Activated CD4-positive, alpha-beta T cell treated with anti-CD3 and anti-CD28 coated beads for 36 hours (primary cell): ENCODE measurements at regions of chr6 and their contacts with region 1.

Region 1: DNA sequence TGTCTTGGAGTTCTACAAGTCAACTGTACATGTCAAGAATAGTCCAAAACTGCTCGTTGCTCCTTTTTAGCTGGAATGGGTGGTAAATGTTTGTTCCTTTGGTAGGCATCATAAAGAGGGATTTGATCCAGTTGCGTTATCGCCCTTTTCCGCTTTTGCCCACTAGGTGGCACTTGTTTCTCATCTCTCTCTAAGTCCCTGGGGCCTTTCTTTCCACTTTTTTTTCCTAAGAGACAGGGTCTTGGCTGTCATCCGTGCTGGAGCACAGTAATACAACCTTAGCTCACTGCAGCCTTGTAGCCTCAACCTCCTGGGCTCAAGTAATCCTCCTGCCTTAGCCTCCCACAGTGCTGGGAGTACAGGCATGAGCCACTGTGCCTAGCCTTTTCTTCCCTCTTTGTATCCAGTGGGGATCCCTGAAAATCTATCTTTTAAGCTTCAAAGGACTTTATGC is 20.7 kb downstream of the GTPBP2 start:
- DNase-seq: peak; percentile 79
- ATAC-seq: peak; percentile 66
- H3K4me3 Mint-ChIP-seq: no peak overlapping the region
- H3K27ac Mint-ChIP-seq: no peak overlapping the region
- H3K4me1 Mint-ChIP-seq: peaks cover 2% of the 10 kb centered on the region
- H3K27me3 Mint-ChIP-seq: no peaks in the 10 kb centered on the region

Region 2: DNA sequence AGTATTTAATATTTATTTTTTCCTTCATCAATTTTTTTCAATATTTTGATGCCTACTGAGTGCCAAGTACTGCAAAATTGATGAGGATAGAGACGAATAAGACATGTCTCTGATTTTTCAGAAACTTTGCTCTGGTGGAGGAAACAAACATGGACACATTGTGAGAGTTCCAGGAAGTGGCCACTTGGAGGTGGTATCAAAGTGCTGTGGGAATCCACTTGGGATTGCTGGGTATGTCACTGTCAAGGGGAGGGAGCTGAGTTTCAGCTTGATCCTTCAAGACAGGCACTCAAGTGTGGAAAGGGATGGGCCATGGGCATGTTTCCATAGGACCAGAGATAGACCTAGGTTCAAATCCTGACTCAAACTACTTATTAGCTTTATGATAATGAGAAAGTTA is 205.5 kb before region 1 on chr6:
- CTCF ChIA-PET with region 1: no interaction called
- POLR2A ChIA-PET with region 1: no interaction called
- intact Hi-C with region 1: no loop called
- DNase-seq: no peak
- ATAC-seq: no peak
- H3K4me3 Mint-ChIP-seq: no peak overlapping the region
- H3K27ac Mint-ChIP-seq: no peak overlapping the region
- H3K4me1 Mint-ChIP-seq: no peaks in the 10 kb centered on the region
- H3K27me3 Mint-ChIP-seq: peaks cover 3% of the 10 kb centered on the region

Region 3: GRCh38 chr6:43584892-43585570 is 23.3 kb before region 1 on chr6:
- CTCF ChIA-PET with region 1: interaction called, 10 read pairs
- POLR2A ChIA-PET with region 1: no interaction called
- intact Hi-C with region 1: no loop called
- DNase-seq: no peak
- ATAC-seq: no peak
- H3K4me3 Mint-ChIP-seq: no peak overlapping the region
- H3K27ac Mint-ChIP-seq: no peak overlapping the region
- H3K4me1 Mint-ChIP-seq: peaks cover 14% of the 10 kb centered on the region
- H3K27me3 Mint-ChIP-seq: no peaks in the 10 kb centered on the region

Region 4: GRCh38 chr6:43593938-43594337 is 14.4 kb before region 1 on chr6:
- CTCF ChIA-PET with region 1: interaction called, 11 read pairs
- POLR2A ChIA-PET with region 1: interaction called, 3 read pairs
- intact Hi-C with region 1: no loop called
- DNase-seq: no peak
- ATAC-seq: no peak
- H3K4me3 Mint-ChIP-seq: no peak overlapping the region
- H3K27ac Mint-ChIP-seq: no peak overlapping the region
- H3K4me1 Mint-ChIP-seq: no peaks in the 10 kb centered on the region
- H3K27me3 Mint-ChIP-seq: no peaks in the 10 kb centered on the region

Region 5: DNA sequence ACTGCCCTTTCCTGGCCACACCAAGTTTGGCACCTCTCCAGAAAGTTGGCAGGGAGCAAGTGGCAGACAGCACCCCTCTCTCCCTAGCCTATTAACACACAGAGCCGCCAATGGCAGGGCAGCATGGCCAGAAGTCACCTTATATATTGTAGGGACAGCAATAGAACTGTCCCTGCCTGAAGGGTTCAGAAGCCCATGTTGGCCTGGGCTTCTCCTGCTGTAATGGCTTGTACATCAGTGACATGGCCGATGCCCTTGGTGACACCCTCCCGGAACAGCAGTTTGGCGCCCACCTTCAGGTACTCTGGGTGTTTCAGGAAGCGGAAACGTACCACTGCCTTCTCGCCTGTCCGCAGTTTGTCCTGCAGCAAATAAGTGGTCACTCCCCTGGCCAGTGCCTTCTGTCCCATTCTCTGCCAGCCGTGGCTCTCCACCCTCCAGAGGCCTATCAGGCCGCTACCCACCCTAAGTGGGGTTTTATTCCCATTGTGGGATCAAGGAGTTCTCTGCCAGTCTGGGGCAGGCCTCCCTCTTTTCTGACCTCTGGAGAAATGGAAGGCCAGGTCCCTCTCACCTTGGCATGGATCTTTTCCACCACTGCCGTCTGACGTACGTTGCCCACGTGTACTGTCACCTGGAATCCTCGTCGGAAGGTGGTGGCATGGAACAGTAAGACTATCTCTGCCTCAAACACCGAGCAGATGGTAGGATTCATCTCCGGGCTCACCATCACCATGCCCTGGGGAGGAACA is 13.3 kb after region 1 on chr6:
- CTCF ChIA-PET with region 1: interaction called, 20 read pairs
- POLR2A ChIA-PET with region 1: no interaction called
- intact Hi-C with region 1: no loop called
- DNase-seq: no peak
- ATAC-seq: no peak
- H3K4me3 Mint-ChIP-seq: no peak overlapping the region
- H3K27ac Mint-ChIP-seq: no peak overlapping the region
- H3K4me1 Mint-ChIP-seq: peaks cover 2% of the 10 kb centered on the region
- H3K27me3 Mint-ChIP-seq: no peaks in the 10 kb centered on the region

Region 6: GRCh38 chr6:43657221-43657802 is 49.0 kb after region 1 on chr6:
- CTCF ChIA-PET with region 1: no interaction called
- POLR2A ChIA-PET with region 1: no interaction called
- intact Hi-C with region 1: no loop called
- DNase-seq: no peak
- ATAC-seq: no peak
- H3K4me3 Mint-ChIP-seq: no peak overlapping the region
- H3K27ac Mint-ChIP-seq: no peak overlapping the region
- H3K4me1 Mint-ChIP-seq: no peaks in the 10 kb centered on the region
- H3K27me3 Mint-ChIP-seq: no peaks in the 10 kb centered on the region